Gastrocnemius medialis (tissue), 4 donors: ENCODE measurements at regions of chr13 and their contacts with region 1.

Region 1: DNA sequence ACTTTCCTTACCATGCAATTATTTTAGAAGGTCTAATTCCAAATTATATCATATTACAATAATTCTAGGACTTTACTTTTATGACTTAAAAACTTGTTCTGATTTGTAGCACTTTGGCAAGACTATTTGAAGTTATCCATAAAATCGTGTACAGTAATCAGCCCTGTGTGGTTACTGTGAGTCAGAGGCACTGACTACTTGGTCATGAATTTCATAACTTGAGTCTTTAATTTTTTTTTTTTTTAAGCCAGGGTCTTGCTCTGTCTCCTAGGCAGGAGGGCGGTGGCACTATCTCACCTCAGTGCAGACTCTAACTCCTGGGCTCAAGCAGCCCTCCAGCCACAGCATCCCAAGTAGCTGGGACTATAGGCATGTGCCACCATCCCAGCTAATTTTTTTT is 1319.2 kb upstream of the SLC10A2 start:
- DNase-seq: no peak
- ATAC-seq: no peak
- H3K4me3 ChIP-seq: no peak overlapping the region
- H3K27ac ChIP-seq: no peak overlapping the region
- H3K4me1 ChIP-seq: no peaks in the 10 kb centered on the region
- H3K27me3 ChIP-seq: no peaks in the 10 kb centered on the region
- CTCF ChIP-seq: no peak
- POLR2A ChIP-seq: no peak

Region 2: DNA sequence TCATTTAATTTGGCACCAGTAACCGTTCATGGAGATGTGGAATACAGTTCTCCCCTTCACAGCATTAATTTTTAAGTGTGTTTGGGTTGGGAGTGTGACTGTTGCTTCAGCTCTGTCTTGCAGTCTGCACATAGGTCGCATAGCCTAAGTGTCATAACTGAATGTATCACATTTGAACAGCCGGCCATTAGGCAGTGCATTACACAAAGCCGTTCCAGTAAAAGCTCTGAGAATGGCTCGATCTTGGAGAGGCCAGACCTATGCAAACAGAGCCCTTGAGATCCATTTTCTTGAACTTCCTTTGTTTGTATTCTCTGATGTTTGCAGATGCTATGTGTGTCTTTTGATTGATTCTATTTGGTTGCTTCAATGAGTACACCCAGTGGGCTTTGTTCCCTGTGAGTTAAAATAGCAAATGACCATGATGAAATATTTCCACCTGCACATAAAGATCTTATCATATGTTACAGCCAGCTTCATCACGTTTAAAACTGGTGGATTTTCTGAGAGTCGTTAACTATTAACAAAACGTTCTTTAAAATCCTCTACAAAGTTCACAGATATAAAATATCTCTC is 214.3 kb before region 1 on chr13:
- in situ Hi-C with region 1: no loop called
- intact Hi-C with region 1: no loop called
- DNase-seq: no peak
- ATAC-seq: no peak
- H3K4me3 ChIP-seq: no peak overlapping the region
- H3K27ac ChIP-seq: no peak overlapping the region
- H3K4me1 ChIP-seq: peaks cover 0 to 3% of the 10 kb centered on the region in 2 donors
- H3K27me3 ChIP-seq: no peaks in the 10 kb centered on the region
- CTCF ChIP-seq: no peak
- POLR2A ChIP-seq: no peak

Region 3: GRCh38 chr13:104286566-104287290 is 98.7 kb before region 1 on chr13:
- in situ Hi-C with region 1: loop called in 1 of 4 experiments (anchors 25 kb)
- intact Hi-C with region 1: no loop called
- DNase-seq: no peak
- ATAC-seq: no peak
- H3K4me3 ChIP-seq: no peak overlapping the region
- H3K27ac ChIP-seq: no peak overlapping the region
- H3K4me1 ChIP-seq: no peaks in the 10 kb centered on the region
- H3K27me3 ChIP-seq: no peaks in the 10 kb centered on the region
- CTCF ChIP-seq: no peak
- POLR2A ChIP-seq: no peak